ENCODE measurements at regions of chr2 and their contacts with region 1.

Region 1: DNA sequence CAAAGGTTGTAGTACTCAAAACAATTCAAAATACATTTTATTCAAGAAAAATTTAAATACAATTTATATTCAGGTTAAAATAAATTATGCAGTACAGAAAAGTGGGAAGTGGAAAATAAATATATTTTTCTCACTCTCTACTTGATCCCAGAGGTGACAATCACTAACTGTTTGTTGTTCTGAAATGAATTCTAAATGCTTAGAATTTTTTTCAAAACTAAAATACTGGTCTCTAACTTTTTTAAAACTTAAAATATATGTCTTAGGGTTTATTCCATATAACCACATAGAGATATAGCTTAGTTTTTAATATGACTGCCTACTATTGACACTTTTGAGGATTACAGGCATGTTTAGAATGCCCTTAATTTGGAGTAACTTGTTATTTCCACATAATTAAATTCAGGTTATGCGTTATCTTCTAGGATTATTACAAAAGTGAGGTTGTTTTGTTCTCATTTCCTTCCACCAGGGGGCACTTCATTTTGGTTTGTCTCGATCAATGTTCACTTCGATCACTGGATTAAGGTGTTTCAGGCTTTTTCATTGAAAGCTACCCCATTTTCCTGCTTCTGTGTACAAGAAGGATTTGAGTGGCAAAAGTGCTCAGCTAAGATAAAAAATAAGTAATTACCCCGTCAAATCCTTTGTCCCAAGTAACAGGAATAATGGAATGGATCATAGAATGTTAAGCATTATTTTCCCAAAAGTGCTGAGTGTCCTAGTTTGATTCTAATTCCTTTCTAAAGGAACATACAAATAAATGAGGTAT is 27.1 kb upstream of the TFPI start:
- DNase-seq: peak; percentile 37
- ATAC-seq: no peak
- H3K4me3 Mint-ChIP-seq: no peak overlapping the region
- H3K27ac Mint-ChIP-seq: no peak overlapping the region
- H3K4me1 Mint-ChIP-seq: peaks cover 9% of the 10 kb centered on the region
- H3K27me3 Mint-ChIP-seq: peaks cover 4% of the 10 kb centered on the region
- CTCF ChIP-seq: peak; percentile 74

Region 2: GRCh38 chr2:187187519-187187918 is 393.8 kb before region 1 on chr2:
- CTCF ChIA-PET with region 1: no interaction called
- POLR2A ChIA-PET with region 1: no interaction called
- intact Hi-C with region 1: no loop called
- DNase-seq: no peak
- ATAC-seq: no peak
- H3K4me3 Mint-ChIP-seq: no peak overlapping the region
- H3K27ac Mint-ChIP-seq: no peak overlapping the region
- H3K4me1 Mint-ChIP-seq: no peaks in the 10 kb centered on the region
- H3K27me3 Mint-ChIP-seq: no peaks in the 10 kb centered on the region
- CTCF ChIP-seq: no peak

Region 3: DNA sequence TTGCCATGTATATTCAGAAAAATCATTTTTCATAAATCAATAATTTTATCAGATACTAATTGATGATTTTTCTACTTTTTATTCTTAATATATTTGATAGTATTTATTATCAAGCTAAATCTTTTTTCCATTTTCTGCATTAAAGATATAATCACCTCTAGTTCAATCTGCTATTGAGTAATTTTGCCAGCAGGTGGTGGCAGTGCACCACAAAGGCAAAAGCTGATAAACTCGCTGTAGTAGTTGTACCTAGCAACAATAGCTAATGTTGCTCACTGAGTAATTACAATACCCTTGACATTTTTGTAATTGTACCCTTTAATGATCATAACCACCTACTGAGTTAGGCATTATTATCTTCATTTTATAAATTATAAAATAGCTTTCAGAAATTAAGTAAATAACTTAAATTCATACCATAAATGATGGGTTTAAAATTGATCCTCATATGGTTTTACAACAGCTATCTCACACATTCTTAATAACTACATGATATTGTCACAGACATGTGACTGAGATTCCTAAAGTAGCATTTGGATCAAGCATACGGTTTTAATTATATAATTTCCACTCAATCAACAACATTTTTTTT is 81.3 kb before region 1 on chr2:
- CTCF ChIA-PET with region 1: interaction called, 83 read pairs
- POLR2A ChIA-PET with region 1: no interaction called
- intact Hi-C with region 1: loop called (anchors 1 kb)
- DNase-seq: peak; percentile 72
- ATAC-seq: peak; percentile 73
- H3K4me3 Mint-ChIP-seq: no peak overlapping the region
- H3K27ac Mint-ChIP-seq: no peak overlapping the region
- H3K4me1 Mint-ChIP-seq: no peaks in the 10 kb centered on the region
- H3K27me3 Mint-ChIP-seq: peaks cover 1% of the 10 kb centered on the region
- CTCF ChIP-seq: peak; percentile 84

Region 4: DNA sequence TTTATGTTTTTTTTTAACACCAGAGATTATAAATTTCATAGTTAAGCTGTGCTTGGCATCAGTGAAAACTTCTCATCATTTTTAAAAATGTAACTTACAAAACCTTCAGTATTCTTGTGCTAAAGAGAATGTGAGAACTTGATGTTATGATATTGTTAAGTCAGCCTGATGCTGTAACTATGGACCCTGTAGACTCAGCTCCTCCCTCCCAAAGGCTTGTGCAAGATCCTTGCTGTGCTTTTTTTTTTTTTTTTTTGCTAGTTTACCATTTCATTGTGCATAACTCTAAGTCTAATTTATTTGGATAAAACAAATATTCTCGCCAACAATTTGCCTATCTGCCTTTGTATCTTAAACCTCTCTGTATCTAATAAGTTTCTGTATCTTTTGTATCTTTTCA is 14.2 kb before region 1 on chr2:
- CTCF ChIA-PET with region 1: interaction called, 10 read pairs
- POLR2A ChIA-PET with region 1: no interaction called
- intact Hi-C with region 1: no loop called
- DNase-seq: no peak
- ATAC-seq: no peak
- H3K4me3 Mint-ChIP-seq: no peak overlapping the region
- H3K27ac Mint-ChIP-seq: no peak overlapping the region
- H3K4me1 Mint-ChIP-seq: no peaks in the 10 kb centered on the region
- H3K27me3 Mint-ChIP-seq: no peaks in the 10 kb centered on the region
- CTCF ChIP-seq: no peak

Region 5: DNA sequence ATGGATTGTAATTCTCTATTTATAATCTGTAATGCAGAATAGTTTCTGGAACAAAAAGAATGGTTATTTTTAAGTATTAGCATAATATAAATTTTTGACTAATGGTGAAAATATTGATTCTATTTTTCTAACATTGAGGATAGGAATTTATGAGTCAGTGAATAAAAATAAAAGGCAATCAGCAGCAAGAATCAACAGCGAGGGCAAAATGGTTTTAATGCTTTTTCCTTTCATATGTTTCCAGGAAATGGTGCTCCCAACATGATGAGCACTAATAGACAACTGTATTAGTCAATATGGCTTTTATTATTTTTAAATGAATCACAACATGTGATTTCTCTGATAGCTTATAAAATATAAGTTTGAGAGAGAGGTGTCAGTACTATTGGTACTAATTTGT is 63.7 kb after region 1 on chr2:
- CTCF ChIA-PET with region 1: no interaction called
- POLR2A ChIA-PET with region 1: no interaction called
- intact Hi-C with region 1: no loop called
- DNase-seq: no peak
- ATAC-seq: no peak
- H3K4me3 Mint-ChIP-seq: no peak overlapping the region
- H3K27ac Mint-ChIP-seq: no peak overlapping the region
- H3K4me1 Mint-ChIP-seq: no peaks in the 10 kb centered on the region
- H3K27me3 Mint-ChIP-seq: no peaks in the 10 kb centered on the region
- CTCF ChIP-seq: no peak

Region 6: DNA sequence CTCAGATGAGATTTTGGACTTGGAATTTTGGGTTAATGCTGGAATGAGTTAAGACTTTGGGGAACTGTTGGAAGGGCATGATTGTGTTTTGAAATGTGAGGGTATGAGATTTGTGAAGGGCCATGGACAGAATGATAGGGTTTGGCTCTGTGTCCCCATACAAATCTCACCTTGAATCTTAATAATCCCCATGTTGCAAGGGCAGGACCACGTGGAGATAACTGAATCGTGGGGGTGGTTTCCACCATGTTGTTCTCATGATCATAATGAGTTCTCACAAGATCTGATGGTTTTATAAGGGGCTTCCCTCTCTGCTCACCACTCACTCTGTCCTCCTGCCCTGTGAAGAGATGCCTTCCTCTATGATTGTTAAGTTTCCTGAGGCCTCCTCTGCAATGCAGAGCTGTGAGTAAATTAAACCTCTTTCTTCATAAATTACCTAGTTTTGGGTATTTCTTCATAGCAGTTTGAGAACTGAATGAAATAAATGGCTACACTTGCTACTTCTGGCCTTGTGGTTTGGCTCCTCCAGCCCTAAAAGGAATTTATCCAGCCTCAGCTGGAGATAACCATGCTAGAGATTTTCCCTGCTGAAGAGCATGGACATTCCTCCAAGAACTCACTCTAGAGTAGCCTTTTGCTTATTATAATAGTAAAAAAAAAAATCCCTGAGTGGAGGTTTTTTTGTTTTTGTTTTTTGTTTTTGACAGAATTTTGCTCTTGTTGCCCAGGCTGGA is 117.2 kb after region 1 on chr2:
- CTCF ChIA-PET with region 1: no interaction called
- POLR2A ChIA-PET with region 1: no interaction called
- intact Hi-C with region 1: no loop called
- DNase-seq: no peak
- ATAC-seq: no peak
- H3K4me3 Mint-ChIP-seq: no peak overlapping the region
- H3K27ac Mint-ChIP-seq: no peak overlapping the region
- H3K4me1 Mint-ChIP-seq: no peaks in the 10 kb centered on the region
- H3K27me3 Mint-ChIP-seq: no peaks in the 10 kb centered on the region
- CTCF ChIP-seq: no peak

Region 7: GRCh38 chr2:187842978-187843847 is 261.9 kb after region 1 on chr2:
- CTCF ChIA-PET with region 1: interaction called, 4 read pairs
- POLR2A ChIA-PET with region 1: no interaction called
- intact Hi-C with region 1: loop called (anchors 5 kb)
- DNase-seq: no peak
- ATAC-seq: no peak
- H3K4me3 Mint-ChIP-seq: no peak overlapping the region
- H3K27ac Mint-ChIP-seq: no peak overlapping the region
- H3K4me1 Mint-ChIP-seq: no peaks in the 10 kb centered on the region
- H3K27me3 Mint-ChIP-seq: no peaks in the 10 kb centered on the region
- CTCF ChIP-seq: peak; percentile 62

Measured in activated CD8-positive, alpha-beta T cell treated with anti-CD3 and anti-CD28 coated beads for 36 hours (primary cell).